Heart left ventricle (tissue), 16 donors: ENCODE measurements at regions of chr3 and their contacts with region 1.

Region 1: GRCh38 chr3:99875929-99876841 is 58.5 kb downstream of the CMSS1 start:
- DNase-seq: peak; percentile 85 to 92 (median 87)
- ATAC-seq: peak; percentile 83 to 98 (median 95)
- H3K4me3 ChIP-seq: peak overlapping the region; percentile 59 to 84 (median 76)
- H3K27ac ChIP-seq: peak overlapping the region; percentile 88 to 97 (median 96)
- H3K4me1 ChIP-seq: peaks cover 5 to 75% (median 25%) of the 10 kb centered on the region in 12 donors
- H3K27me3 ChIP-seq: no peaks in the 10 kb centered on the region
- CTCF ChIP-seq: peak in 4 of 12 donors; percentile 9 to 33 (median 26)
- POLR2A ChIP-seq: peak; percentile 81 to 98

Region 2: DNA sequence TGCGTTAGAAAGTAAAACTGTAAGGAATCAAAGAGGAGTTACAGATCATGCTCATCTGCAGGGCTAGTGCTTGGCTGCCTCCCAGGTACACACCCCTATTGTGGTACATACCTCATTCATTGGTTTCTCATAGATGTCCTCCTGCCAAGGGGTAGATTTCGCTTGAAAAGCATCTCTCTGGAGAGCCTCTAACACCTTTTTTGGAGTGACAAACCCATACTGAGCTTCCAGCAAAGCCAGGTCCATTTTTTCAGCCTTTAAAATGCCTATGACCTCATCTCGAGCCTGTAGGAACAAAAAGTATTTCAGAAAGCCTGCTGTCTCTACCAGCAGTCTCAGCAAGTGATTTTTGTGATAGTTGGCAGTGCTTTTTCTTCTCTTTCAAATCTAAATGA is 53.6 kb after region 1 on chr3:
- intact Hi-C with region 1: loop called in 5 of 10 experiments (anchors 5 to 10 kb)
- DNase-seq: peak in 2 of 5 donors; percentile 23 to 46
- ATAC-seq: peak; percentile 40 to 56 (median 45)
- H3K4me3 ChIP-seq: peak overlapping the region in 1 of 12 donors; percentile 3
- H3K27ac ChIP-seq: peak overlapping the region; percentile 12 to 77 (median 52)
- H3K4me1 ChIP-seq: peaks cover 0 to 62% (median 35%) of the 10 kb centered on the region in 12 donors
- H3K27me3 ChIP-seq: no peaks in the 10 kb centered on the region
- CTCF ChIP-seq: no peak
- POLR2A ChIP-seq: no peak

Region 3: GRCh38 chr3:100002599-100003350 is 126.6 kb after region 1 on chr3:
- intact Hi-C with region 1: loop called in 6 of 10 experiments (anchors 5 to 10 kb)
- DNase-seq: no peak
- ATAC-seq: peak in 3 of 4 donors; percentile 72 to 77 (median 73)
- H3K4me3 ChIP-seq: no peak overlapping the region
- H3K27ac ChIP-seq: peak overlapping the region in 3 of 12 donors; percentile 2 to 46 (median 13)
- H3K4me1 ChIP-seq: peaks cover 10 to 53% (median 35%) of the 10 kb centered on the region in 12 donors
- H3K27me3 ChIP-seq: no peaks in the 10 kb centered on the region
- CTCF ChIP-seq: no peak
- POLR2A ChIP-seq: no peak

Region 4: GRCh38 chr3:100047455-100048141 is 171.4 kb after region 1 on chr3:
- intact Hi-C with region 1: loop called in 4 of 10 experiments (anchors 5 to 10 kb)
- DNase-seq: no peak
- ATAC-seq: peak; percentile 27 to 62 (median 40)
- H3K4me3 ChIP-seq: peak overlapping the region in 1 of 12 donors; percentile 18
- H3K27ac ChIP-seq: peak overlapping the region; percentile 10 to 92 (median 76)
- H3K4me1 ChIP-seq: peaks cover 2 to 62% (median 33%) of the 10 kb centered on the region in 12 donors
- H3K27me3 ChIP-seq: no peaks in the 10 kb centered on the region
- CTCF ChIP-seq: no peak
- POLR2A ChIP-seq: no peak

Region 5: DNA sequence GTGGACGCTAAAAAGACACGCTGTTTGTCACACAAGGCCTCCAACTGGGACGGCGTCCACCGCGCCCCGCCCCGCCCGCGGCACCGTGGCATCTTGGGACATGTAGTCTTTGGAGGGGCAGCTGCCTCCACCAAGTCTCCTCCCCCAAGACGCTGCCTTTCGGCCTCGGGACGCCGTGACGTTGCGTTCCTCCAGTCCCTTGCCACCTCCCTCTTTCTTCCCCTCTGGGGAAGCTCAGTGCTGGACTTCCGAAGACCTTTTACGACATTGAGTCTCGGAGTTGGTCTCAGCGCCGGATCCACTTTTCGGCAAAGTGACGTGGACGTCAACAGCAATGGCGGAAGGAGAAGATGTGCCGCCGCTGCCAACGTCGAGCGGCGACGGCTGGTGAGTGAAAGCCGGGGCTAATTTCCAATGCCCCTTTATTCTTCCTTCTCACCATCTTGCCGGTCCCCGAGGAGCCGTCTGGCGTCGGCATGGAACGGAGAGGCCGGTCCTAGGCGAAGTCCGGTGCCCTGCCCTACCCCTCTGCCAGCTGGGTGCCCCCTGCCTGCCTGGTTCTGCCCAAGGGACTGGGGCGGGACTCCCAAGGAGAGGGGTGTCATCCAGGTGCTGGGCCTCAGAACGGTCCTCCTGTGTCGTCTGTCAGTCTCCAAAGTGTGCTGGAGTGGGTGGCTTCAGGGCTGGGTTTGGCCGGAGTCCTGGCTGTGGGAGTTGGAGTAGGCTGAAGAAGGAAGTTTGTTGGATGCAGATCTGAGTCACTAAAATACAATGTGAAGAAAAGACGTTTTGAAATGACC is 384.7 kb after region 1 on chr3 and contains the start of gene TBC1D23:
- intact Hi-C with region 1: loop called in 1 of 10 experiments (anchors 1 kb)
- DNase-seq: peak; percentile 99
- ATAC-seq: peak; percentile 99
- H3K4me3 ChIP-seq: peak within 1 kb of the TSS; percentile 66 to 97 (median 88)
- H3K27ac ChIP-seq: peak within 1 kb of the TSS; percentile 84 to 98 (median 92)
- H3K4me1 ChIP-seq: peaks cover 0 to 67% (median 40%) of the 10 kb centered on the region in 12 donors
- H3K27me3 ChIP-seq: no peaks in the 10 kb centered on the region
- CTCF ChIP-seq: peak in 1 of 12 donors; percentile 29
- POLR2A ChIP-seq: peak; percentile 24 to 83
- total RNA-seq, gene TBC1D23: 17.7 to 38.3 (median 32.9) TPM